ENCODE measurements at regions of chr11 and their contacts with region 1.

Region 1: DNA sequence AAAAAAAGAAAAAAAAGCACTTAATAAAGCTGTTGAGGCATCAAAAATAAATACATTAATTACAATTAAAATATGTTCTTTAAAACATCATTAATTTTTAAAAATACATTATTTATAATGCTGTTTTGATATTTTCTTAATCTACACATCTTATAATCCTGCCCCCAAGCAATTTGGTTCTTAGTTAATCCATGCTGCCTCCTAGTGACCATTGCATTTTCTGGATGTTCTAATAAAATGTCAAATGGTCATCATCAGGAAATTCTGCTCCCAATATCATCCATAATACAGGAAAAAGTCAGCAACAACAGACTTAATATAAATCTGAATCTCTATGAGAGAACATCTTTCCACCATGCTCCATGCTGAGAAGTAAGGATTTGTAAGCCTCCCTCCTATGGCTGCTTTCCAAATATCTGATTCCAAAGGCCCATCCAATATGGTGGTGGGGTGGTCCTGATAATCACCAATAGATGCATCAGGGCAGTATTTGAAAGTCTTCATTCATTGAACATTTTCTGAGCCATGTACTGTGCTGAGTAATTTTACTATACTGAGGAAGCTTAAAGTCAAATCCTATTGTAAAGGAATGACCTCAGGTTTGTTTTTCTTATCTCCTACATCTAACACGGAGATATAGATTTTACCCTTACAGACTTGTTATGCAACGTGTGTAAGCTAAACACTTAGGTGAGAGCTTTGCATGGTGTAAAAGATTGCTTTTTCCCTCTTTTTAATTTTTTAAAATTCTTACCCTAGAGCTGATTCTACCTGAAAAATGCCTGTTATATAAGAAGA is 124.7 kb upstream of the BMAL1 start:
- DNase-seq: peak; percentile 12
- H3K4me3 ChIP-seq: no peak overlapping the region
- H3K27ac ChIP-seq: no peak overlapping the region
- H3K27me3 ChIP-seq: peaks cover 2% of the 10 kb centered on the region
- CTCF ChIP-seq: peak; percentile 55

Region 2: DNA sequence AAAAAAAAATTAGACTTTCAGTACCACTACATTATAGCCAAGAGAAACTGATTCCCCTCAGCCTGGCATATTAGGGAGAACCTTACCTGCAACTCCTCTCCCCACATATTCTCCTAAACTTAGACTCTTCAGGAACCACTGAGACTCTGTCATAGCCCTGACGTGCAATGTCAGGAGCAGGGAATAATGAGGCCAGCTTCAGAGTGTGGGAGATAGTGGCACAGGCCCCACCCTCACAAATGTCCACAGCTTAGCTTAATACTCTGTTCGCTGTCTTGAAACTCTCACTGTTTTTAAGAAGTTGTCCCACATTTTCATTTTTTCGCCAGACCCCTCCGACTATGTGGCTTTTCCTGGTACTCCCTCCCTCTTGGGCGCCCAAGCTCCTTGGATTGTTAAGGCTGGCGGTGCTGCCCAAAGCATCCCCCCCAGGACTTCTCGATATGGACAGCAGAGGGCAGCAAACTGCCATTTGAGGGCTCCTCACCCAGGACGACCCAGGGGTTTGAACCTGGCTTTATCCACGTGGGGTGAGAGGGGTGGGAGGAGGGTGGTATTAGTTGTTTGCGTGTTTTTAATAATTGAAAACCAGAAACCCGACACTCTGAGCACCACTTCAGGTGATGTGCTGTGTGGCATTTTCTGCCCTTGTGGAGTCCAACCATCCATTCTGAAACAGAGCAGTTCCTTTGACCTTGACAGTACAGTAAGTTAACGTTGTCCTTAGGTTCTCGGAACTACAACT is 189.0 kb before region 1 on chr11:
- in situ Hi-C with region 1: loop called (anchors 25 kb)
- DNase-seq: peak; percentile 66
- H3K4me3 ChIP-seq: no peak overlapping the region
- H3K27ac ChIP-seq: no peak overlapping the region
- H3K27me3 ChIP-seq: peaks cover 10% of the 10 kb centered on the region
- CTCF ChIP-seq: peak; percentile 89

Region 3: DNA sequence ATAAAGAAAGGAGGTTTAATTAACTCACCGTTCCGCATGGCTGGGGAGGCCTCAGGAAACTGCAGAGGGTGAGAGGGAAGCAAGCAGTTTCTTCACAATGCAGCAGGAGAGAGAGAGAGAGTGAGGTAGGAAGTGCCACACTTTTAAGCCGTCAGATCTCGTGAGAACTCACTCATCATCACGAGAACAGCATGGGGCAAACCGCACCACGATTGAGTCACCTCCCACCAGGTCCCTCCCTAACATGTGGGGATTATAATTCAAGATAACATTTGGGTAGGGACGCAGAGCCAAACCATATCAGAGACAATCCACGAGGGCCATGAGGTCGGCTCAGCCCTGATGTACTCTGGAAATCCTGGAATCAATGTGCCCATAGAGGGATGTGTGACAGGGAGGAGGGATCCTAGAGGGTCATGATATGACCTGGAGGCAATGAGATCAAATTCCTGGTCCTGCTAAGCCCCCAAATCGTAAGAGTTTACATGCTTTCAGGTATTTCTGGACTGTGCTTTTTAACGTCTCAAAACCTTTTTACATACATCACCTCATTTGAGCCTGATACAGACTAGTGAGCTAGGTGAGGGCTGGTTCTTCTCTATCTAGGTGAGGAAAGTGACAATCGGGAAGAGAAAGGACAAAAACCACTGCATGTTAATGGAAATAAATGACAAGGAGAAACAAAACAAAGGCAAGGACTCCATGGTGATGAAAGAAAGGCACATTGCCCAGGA is 163.3 kb before region 1 on chr11:
- in situ Hi-C with region 1: no loop called
- DNase-seq: no peak
- H3K4me3 ChIP-seq: no peak overlapping the region
- H3K27ac ChIP-seq: no peak overlapping the region
- H3K27me3 ChIP-seq: peaks cover 15% of the 10 kb centered on the region
- CTCF ChIP-seq: no peak

Region 4: DNA sequence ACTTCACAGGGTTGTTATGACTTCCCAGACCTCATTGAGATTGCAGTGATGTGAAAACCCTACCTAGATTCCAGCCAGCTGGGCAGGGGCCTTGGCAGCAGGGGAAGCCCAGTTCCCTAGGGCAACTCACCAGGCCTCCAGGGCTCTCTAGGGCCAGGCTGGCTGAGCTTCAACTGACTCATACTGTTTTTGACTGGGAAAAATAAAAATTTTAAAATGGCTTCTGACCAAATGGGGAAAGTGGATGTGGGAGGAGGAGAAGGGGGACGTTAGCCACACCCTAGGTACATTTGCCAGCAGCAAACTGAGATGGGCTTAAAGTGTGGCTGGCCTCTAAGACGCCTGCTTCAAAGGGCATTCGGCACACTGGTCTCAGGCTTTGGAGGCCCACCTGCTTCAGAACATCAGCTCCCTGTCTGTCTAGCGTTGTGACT is 163.6 kb after region 1 on chr11:
- in situ Hi-C with region 1: no loop called
- DNase-seq: peak; percentile 20
- H3K4me3 ChIP-seq: no peak overlapping the region
- H3K27ac ChIP-seq: no peak overlapping the region
- H3K27me3 ChIP-seq: no peaks in the 10 kb centered on the region
- CTCF ChIP-seq: no peak